ENCODE measurements at regions of chr10 and their contacts with region 1.

Region 1: DNA sequence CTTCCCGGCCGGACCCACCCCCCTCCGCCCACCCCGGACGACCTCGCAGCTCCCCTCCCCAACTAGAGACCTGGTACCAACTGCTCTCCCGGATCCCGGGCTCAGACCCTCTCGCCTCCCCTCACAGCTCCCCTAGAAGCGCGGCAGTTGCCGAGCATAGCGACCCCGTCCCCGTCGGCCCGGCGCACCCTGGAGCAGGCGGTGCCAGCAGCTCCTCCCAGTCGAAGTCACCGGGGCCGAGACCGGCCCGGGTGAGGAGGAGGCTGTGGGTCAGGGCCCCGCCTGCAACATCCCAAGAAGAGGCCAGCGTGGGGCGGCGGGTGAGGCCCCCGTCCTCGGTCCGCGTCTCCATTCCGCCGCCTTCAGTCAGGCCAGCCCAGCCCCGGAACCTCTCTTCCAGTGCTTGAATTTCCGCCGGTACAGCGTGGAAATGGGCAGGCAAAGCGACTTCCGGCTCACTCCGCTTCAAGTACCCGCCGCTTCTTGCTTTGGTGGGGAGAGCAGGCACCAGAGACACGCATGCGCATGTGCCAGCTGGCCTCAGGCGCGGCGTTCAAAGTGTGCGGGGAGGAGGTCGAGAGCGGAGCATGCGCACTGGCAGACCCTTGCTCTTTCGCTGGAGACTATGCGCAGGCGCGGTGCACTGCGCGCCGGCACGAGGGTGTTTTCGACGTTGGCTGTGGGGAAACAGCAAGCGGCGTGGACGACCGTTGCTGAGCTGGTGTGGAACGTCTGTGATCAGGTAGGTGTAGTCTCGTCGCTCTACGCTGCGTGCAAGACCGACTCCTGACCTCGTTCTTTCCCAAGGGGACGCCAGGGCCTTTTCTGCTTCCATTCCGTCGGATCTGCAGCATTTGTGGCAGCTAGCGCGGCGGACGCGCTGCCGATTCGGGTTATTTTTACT is at the start of gene C10orf88:
- DNase-seq: peak; percentile 99
- ATAC-seq: peak; percentile 99
- H3K4me3 ChIP-seq: peak within 1 kb of the TSS; percentile 58
- H3K27ac ChIP-seq: peak within 1 kb of the TSS; percentile 57
- H3K4me1 ChIP-seq: no peaks in the 10 kb centered on the region
- H3K27me3 ChIP-seq: no peaks in the 10 kb centered on the region
- CTCF ChIP-seq: no peak
- POLR2A ChIP-seq: no peak
- RAD21 ChIP-seq: no peak; the same call in 1 of the 2 replicates
- total RNA-seq, gene C10orf88: 12.2 and 16.4 TPM in 2 replicates

Region 2: GRCh38 chr10:121974535-121975294 is 979.4 kb before region 1 on chr10 and contains the start of gene NSMCE4A:
- CTCF ChIA-PET with region 1: no interaction called
- POLR2A ChIA-PET with region 1: no interaction called
- dilution Hi-C with region 1: no loop called
- in situ Hi-C with region 1: no loop called
- intact Hi-C with region 1: no loop called
- DNase-seq: peak; percentile 71
- ATAC-seq: peak; percentile 92
- H3K4me3 ChIP-seq: peak within 1 kb of the TSS; percentile 60
- H3K27ac ChIP-seq: peak within 1 kb of the TSS; percentile 57
- H3K4me1 ChIP-seq: peaks cover 2% of the 10 kb centered on the region; the same call in 1 of the 2 replicates
- H3K27me3 ChIP-seq: no peaks in the 10 kb centered on the region
- CTCF ChIP-seq: peak; percentile 71; the same call in 1 of the 2 replicates
- POLR2A ChIP-seq: peak; percentile 55; the same call in 1 of the 2 replicates
- RAD21 ChIP-seq: peak; percentile 49
- total RNA-seq, gene NSMCE4A: 13.4 and 20.8 TPM in 2 replicates

Region 3: DNA sequence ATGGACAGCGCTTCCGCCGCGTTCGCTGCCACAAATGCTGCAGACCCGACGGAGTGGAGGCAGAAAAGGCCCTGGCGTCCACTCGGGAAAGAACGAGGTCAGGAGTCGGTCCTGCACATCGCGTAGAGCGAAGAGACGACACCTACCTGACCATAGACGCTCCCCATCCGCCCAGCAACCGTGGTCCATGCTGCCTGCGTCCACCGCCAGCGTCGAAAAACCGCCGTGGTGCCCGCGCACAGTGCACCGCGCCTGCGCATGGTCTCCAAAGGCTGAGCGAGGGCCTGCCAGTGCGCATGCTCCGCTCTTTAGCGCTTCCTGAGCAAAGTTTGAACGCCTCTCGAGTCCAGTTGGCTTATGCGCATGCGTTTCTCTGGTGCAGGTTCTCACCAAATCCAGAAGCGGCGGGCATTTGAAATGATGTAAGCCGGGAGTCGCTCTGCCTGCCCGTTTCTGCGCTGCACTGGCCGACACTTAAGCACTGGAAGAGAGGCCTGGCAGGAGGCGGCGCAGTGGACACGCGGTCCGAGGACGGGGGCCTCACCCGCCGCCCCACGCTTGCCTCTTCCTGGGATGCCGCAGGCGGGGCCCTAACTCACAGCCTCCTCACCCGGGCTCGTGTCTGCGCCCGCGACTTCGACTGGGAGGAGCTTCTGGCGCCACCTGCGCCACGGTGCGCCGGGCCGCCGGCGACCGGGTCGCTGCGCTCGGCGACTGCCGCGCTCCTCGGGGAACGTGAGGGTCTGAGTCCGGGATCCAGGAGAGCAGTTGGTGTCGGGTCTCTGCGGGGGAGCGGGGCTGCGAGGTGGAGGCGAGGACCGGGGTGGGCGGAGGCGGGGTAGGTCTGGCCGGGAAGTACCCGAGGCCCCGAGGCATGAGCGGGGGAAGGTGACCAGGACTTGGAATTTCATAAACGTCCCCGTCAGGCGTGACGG is 74.5 kb before region 1 on chr10 and contains the start of gene FAM24B:
- CTCF ChIA-PET with region 1: no interaction called
- POLR2A ChIA-PET with region 1: no interaction called
- dilution Hi-C with region 1: no loop called
- in situ Hi-C with region 1: no loop called
- intact Hi-C with region 1: loop called (anchors 5 kb)
- DNase-seq: peak; percentile 98
- ATAC-seq: peak; percentile 95
- H3K4me3 ChIP-seq: peak within 1 kb of the TSS; percentile 78
- H3K27ac ChIP-seq: peak within 1 kb of the TSS; percentile 64; the same call in 1 of the 2 replicates
- H3K4me1 ChIP-seq: peaks cover 3% of the 10 kb centered on the region
- H3K27me3 ChIP-seq: no peaks in the 10 kb centered on the region
- CTCF ChIP-seq: no peak
- POLR2A ChIP-seq: no peak
- RAD21 ChIP-seq: no peak; the same call in 1 of the 2 replicates
- total RNA-seq, gene FAM24B: 1.6 and 2.2 TPM in 2 replicates

Region 4: GRCh38 chr10:123008439-123009205 is 54.5 kb after region 1 on chr10 and contains the starts of genes ACADSB and IKZF5:
- CTCF ChIA-PET with region 1: no interaction called
- POLR2A ChIA-PET with region 1: no interaction called
- dilution Hi-C with region 1: no loop called
- in situ Hi-C with region 1: no loop called
- intact Hi-C with region 1: loop called (anchors 2 kb)
- DNase-seq: peak; percentile 97
- ATAC-seq: peak; percentile 97
- H3K4me3 ChIP-seq: peak within 1 kb of the TSS; percentile 66
- H3K27ac ChIP-seq: peak within 1 kb of the TSS; percentile 83
- H3K4me1 ChIP-seq: no peaks in the 10 kb centered on the region
- H3K27me3 ChIP-seq: no peaks in the 10 kb centered on the region
- CTCF ChIP-seq: no peak
- POLR2A ChIP-seq: peak; percentile 91
- RAD21 ChIP-seq: no peak
- total RNA-seq, gene ACADSB: 9.2 and 10.6 TPM in 2 replicates
- total RNA-seq, gene IKZF5: 2.9 and 4.2 TPM in 2 replicates

Region 5: GRCh38 chr10:123103944-123104343 is 149.9 kb after region 1 on chr10:
- CTCF ChIA-PET with region 1: no interaction called
- POLR2A ChIA-PET with region 1: no interaction called
- dilution Hi-C with region 1: no loop called
- in situ Hi-C with region 1: no loop called
- intact Hi-C with region 1: no loop called
- DNase-seq: no peak
- ATAC-seq: no peak
- H3K4me3 ChIP-seq: no peak overlapping the region
- H3K27ac ChIP-seq: no peak overlapping the region
- H3K4me1 ChIP-seq: no peaks in the 10 kb centered on the region
- H3K27me3 ChIP-seq: no peaks in the 10 kb centered on the region
- CTCF ChIP-seq: no peak
- POLR2A ChIP-seq: no peak
- RAD21 ChIP-seq: no peak

Region 6: GRCh38 chr10:123136806-123137642 is 182.9 kb after region 1 on chr10:
- CTCF ChIA-PET with region 1: no interaction called
- POLR2A ChIA-PET with region 1: no interaction called
- dilution Hi-C with region 1: no loop called
- in situ Hi-C with region 1: no loop called
- intact Hi-C with region 1: no loop called
- DNase-seq: no peak
- ATAC-seq: no peak
- H3K4me3 ChIP-seq: no peak overlapping the region
- H3K27ac ChIP-seq: no peak overlapping the region
- H3K4me1 ChIP-seq: peaks cover 2% of the 10 kb centered on the region; the same call in 1 of the 2 replicates
- H3K27me3 ChIP-seq: peaks cover 97% of the 10 kb centered on the region
- CTCF ChIP-seq: no peak
- POLR2A ChIP-seq: no peak
- RAD21 ChIP-seq: no peak

Region 7: GRCh38 chr10:123472606-123473005 is 518.5 kb after region 1 on chr10:
- CTCF ChIA-PET with region 1: no interaction called
- POLR2A ChIA-PET with region 1: no interaction called
- dilution Hi-C with region 1: no loop called
- in situ Hi-C with region 1: no loop called
- intact Hi-C with region 1: no loop called
- DNase-seq: no peak
- ATAC-seq: no peak
- H3K4me3 ChIP-seq: no peak overlapping the region
- H3K27ac ChIP-seq: no peak overlapping the region
- H3K4me1 ChIP-seq: no peaks in the 10 kb centered on the region
- H3K27me3 ChIP-seq: no peaks in the 10 kb centered on the region
- CTCF ChIP-seq: no peak
- POLR2A ChIP-seq: no peak
- RAD21 ChIP-seq: no peak

Measured in IMR-90 (cell line).